CD4-positive, alpha-beta memory T cell (primary cell): ENCODE measurements at regions of chr11 and their contacts with region 1.

Region 1: GRCh38 chr11:35617687-35618496 is at the start of gene FJX1:
- DNase-seq: peak in 2 of 5 donors; percentile 5 to 12
- H3K4me3 ChIP-seq: no peak within 1 kb of the TSS
- H3K4me3 Mint-ChIP-seq: peak within 1 kb of the TSS; percentile 61 to 86 (median 79)
- H3K27ac ChIP-seq: no peak within 1 kb of the TSS
- H3K27ac Mint-ChIP-seq: no peak within 1 kb of the TSS
- H3K4me1 ChIP-seq: peaks cover 15% of the 10 kb centered on the region
- H3K4me1 Mint-ChIP-seq: peaks cover 6 to 29% (median 11%) of the 10 kb centered on the region in 4 donors
- H3K27me3 ChIP-seq: peaks cover 27% of the 10 kb centered on the region
- H3K27me3 Mint-ChIP-seq: peaks cover 43 to 49% of the 10 kb centered on the region in 2 donors
- total RNA-seq, gene FJX1: not detected

Region 2: GRCh38 chr11:35579557-35580396 is 38.1 kb before region 1 on chr11:
- CTCF ChIA-PET with region 1: no interaction called
- POLR2A ChIA-PET with region 1: no interaction called
- intact Hi-C with region 1: no loop called
- DNase-seq: no peak
- H3K4me3 ChIP-seq: no peak overlapping the region
- H3K4me3 Mint-ChIP-seq: no peak overlapping the region
- H3K27ac ChIP-seq: no peak overlapping the region
- H3K27ac Mint-ChIP-seq: no peak overlapping the region
- H3K4me1 ChIP-seq: no peaks in the 10 kb centered on the region
- H3K4me1 Mint-ChIP-seq: no peaks in the 10 kb centered on the region
- H3K27me3 ChIP-seq: peaks cover 4% of the 10 kb centered on the region
- H3K27me3 Mint-ChIP-seq: peaks cover 23 to 35% of the 10 kb centered on the region in 2 donors

Region 3: DNA sequence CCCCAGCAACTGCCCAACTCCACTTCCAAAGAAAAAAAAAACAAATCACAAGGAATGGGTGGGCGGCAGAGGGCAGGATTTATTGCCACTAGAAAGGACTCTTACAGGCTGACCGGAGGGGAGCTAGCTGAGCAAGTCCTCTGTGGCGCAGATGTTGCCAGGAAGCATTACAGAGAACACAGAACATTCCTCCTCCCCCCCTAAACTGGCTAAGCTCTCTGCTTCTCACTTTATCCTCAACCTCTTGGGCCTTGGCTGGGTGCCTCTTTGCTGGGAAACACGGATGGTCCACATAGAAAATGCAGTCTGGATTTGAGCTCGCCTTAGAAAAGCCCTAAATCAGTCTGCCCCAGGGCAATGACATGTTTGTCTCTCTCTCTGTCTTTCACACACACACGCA is 12.2 kb before region 1 on chr11:
- CTCF ChIA-PET with region 1: interaction called, 16 read pairs
- POLR2A ChIA-PET with region 1: no interaction called
- intact Hi-C with region 1: no loop called
- DNase-seq: no peak
- H3K4me3 ChIP-seq: no peak overlapping the region
- H3K4me3 Mint-ChIP-seq: no peak overlapping the region
- H3K27ac ChIP-seq: no peak overlapping the region
- H3K27ac Mint-ChIP-seq: no peak overlapping the region
- H3K4me1 ChIP-seq: no peaks in the 10 kb centered on the region
- H3K4me1 Mint-ChIP-seq: no peaks in the 10 kb centered on the region
- H3K27me3 ChIP-seq: no peaks in the 10 kb centered on the region
- H3K27me3 Mint-ChIP-seq: peaks cover 24 to 41% of the 10 kb centered on the region in 2 donors

Region 4: GRCh38 chr11:35662649-35663407 is 44.9 kb after region 1 on chr11 and contains the start of gene TRIM44:
- CTCF ChIA-PET with region 1: no interaction called
- POLR2A ChIA-PET with region 1: no interaction called
- intact Hi-C with region 1: loop called (anchors 2 kb)
- DNase-seq: peak; percentile 81 to 86 (median 84)
- H3K4me3 ChIP-seq: peak within 1 kb of the TSS; percentile 55 to 81
- H3K4me3 Mint-ChIP-seq: peak within 1 kb of the TSS; percentile 93 to 99 (median 96)
- H3K27ac ChIP-seq: peak within 1 kb of the TSS; percentile 74
- H3K27ac Mint-ChIP-seq: peak within 1 kb of the TSS; percentile 95 to 99 (median 96)
- H3K4me1 ChIP-seq: peaks cover 34% of the 10 kb centered on the region
- H3K4me1 Mint-ChIP-seq: peaks cover 34 to 50% (median 43%) of the 10 kb centered on the region in 4 donors
- H3K27me3 ChIP-seq: no peaks in the 10 kb centered on the region
- H3K27me3 Mint-ChIP-seq: peaks cover 3 to 5% of the 10 kb centered on the region in 2 donors
- total RNA-seq, gene TRIM44: 49.8 to 53.1 TPM

Region 5: GRCh38 chr11:36265793-36266628 is 648.1 kb after region 1 on chr11:
- CTCF ChIA-PET with region 1: interaction called, 61 read pairs
- POLR2A ChIA-PET with region 1: no interaction called
- intact Hi-C with region 1: no loop called
- DNase-seq: peak in 4 of 5 donors; percentile 30 to 46 (median 36)
- H3K4me3 ChIP-seq: no peak overlapping the region
- H3K4me3 Mint-ChIP-seq: no peak overlapping the region
- H3K27ac ChIP-seq: no peak overlapping the region
- H3K27ac Mint-ChIP-seq: no peak overlapping the region
- H3K4me1 ChIP-seq: no peaks in the 10 kb centered on the region
- H3K4me1 Mint-ChIP-seq: peaks cover 0 to 3% (median 0%) of the 10 kb centered on the region in 4 donors
- H3K27me3 ChIP-seq: no peaks in the 10 kb centered on the region
- H3K27me3 Mint-ChIP-seq: peaks cover 7 to 11% of the 10 kb centered on the region in 2 donors

Region 6: GRCh38 chr11:36478700-36479329 is 860.9 kb after region 1 on chr11:
- CTCF ChIA-PET with region 1: interaction called, 3 read pairs
- POLR2A ChIA-PET with region 1: no interaction called
- intact Hi-C with region 1: loop called (anchors 1 kb)
- DNase-seq: peak in 4 of 5 donors; percentile 34 to 43 (median 40)
- H3K4me3 ChIP-seq: no peak overlapping the region
- H3K4me3 Mint-ChIP-seq: no peak overlapping the region
- H3K27ac ChIP-seq: no peak overlapping the region
- H3K27ac Mint-ChIP-seq: peak overlapping the region in 1 of 7 donors; percentile 10
- H3K4me1 ChIP-seq: no peaks in the 10 kb centered on the region
- H3K4me1 Mint-ChIP-seq: peaks cover 3 to 8% (median 6%) of the 10 kb centered on the region in 4 donors
- H3K27me3 ChIP-seq: no peaks in the 10 kb centered on the region
- H3K27me3 Mint-ChIP-seq: no peaks in the 10 kb centered on the region

Region 7: GRCh38 chr11:36492724-36493304 is 874.9 kb after region 1 on chr11:
- CTCF ChIA-PET with region 1: interaction called, 3 read pairs
- POLR2A ChIA-PET with region 1: no interaction called
- intact Hi-C with region 1: loop called (anchors 1 kb)
- DNase-seq: peak in 4 of 5 donors; percentile 42 to 54 (median 46)
- H3K4me3 ChIP-seq: no peak overlapping the region
- H3K4me3 Mint-ChIP-seq: no peak overlapping the region
- H3K27ac ChIP-seq: no peak overlapping the region
- H3K27ac Mint-ChIP-seq: peak overlapping the region in 5 of 7 donors; percentile 18 to 76 (median 26)
- H3K4me1 ChIP-seq: peaks cover 13% of the 10 kb centered on the region
- H3K4me1 Mint-ChIP-seq: peaks cover 13 to 31% (median 17%) of the 10 kb centered on the region in 4 donors
- H3K27me3 ChIP-seq: no peaks in the 10 kb centered on the region
- H3K27me3 Mint-ChIP-seq: no peaks in the 10 kb centered on the region

Region 8: DNA sequence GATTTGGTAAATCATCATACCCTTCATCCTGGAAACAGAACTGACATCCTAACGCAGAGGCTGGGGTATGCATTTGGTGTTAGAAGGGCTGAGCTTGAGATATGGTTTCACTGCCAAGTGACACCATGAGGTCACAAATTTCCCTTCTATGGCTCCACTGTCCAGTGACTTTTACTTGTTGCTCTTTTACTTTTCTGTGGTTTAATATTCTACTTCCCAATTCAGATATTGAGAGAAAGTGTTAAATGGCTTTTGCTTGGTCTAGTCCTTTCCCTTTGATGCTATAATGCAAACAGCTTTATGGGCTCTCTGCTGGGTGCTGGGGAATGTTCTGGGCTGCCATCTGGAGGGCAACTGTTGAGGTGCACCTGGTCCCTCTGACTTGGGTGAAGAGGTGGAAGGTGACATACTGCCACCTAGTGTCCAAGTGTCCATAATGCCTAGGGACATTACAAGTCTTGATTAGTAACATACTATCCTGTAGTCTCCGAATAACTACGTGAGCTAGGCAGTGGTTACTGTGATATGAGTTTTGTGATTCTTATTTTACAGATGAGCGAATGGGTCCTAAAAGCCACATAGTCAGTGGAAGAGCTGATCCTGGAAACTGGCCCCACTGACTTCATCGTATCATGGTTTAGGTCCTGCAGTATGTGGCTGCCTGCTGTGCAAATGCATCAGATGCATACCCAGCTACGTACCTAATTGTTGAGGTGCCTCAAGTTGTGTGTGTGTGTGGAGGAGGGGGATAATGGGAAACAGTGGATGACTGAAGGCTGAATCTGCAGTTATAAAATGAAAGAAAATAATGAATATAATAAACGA is 1129.2 kb after region 1 on chr11:
- CTCF ChIA-PET with region 1: no interaction called
- POLR2A ChIA-PET with region 1: no interaction called
- intact Hi-C with region 1: loop called (anchors 5 kb)
- DNase-seq: peak; percentile 73 to 82 (median 80)
- H3K4me3 ChIP-seq: no peak overlapping the region
- H3K4me3 Mint-ChIP-seq: no peak overlapping the region
- H3K27ac ChIP-seq: no peak overlapping the region
- H3K27ac Mint-ChIP-seq: no peak overlapping the region
- H3K4me1 ChIP-seq: no peaks in the 10 kb centered on the region
- H3K4me1 Mint-ChIP-seq: peaks cover 6 to 11% (median 8%) of the 10 kb centered on the region in 4 donors
- H3K27me3 ChIP-seq: no peaks in the 10 kb centered on the region
- H3K27me3 Mint-ChIP-seq: peaks cover 15 to 31% of the 10 kb centered on the region in 2 donors